Breast epithelium (tissue), 4 donors: ENCODE measurements at regions of chr15 and their contacts with region 1.

Region 1: DNA sequence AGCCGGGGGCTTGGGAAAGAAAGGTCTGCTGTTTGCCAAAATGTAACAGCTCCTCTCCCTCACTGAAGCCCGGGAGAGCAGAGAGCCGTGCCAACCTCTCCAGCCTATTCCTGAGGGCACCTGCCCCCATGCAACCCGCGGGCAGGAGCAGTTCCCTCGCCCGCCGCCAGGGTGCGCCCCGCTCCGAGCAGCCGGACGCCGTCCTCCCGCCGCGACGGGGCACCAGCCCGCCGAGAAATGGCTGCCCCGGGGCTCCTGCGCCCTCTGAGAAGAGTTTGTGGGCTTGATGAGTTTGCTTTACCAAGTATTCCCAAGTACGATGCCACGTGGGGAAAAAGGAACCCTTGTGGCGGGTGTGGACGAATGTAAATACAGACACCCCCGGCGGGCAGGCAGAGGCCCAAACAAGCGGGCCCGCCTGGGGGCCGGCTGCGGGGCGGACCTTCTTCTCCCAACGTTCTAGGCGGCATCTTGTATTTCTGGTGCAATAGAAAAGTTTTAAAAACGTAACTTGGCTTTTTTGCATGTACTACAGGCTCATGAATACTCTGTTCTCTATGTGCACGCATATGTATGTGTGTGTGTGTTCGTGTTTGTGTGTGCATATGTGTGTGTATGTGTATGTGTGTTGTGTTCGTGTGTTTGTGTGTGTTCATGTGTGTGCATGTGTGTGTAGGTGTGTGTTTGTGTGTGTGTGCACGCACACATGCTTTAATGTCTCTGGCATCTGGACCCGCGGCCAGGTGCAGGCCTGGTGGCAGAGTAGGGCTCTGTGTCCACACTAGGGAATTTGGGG is 162.9 kb downstream of the CHSY1 start:
- DNase-seq: peak; percentile 41 to 74
- H3K4me3 ChIP-seq: peak overlapping the region; percentile 23 to 47 (median 31)
- H3K27ac ChIP-seq: peak overlapping the region; percentile 79 to 92
- H3K4me1 ChIP-seq: peaks cover 8 to 12% of the 10 kb centered on the region in 2 donors
- H3K27me3 ChIP-seq: no peaks in the 10 kb centered on the region
- CTCF ChIP-seq: peak; percentile 97 to 98 (median 98)
- POLR2A ChIP-seq: no peak

Region 2: GRCh38 chr15:101062471-101063171 is 26.4 kb before region 1 on chr15:
- intact Hi-C with region 1: loop called (anchors 1 kb)
- DNase-seq: no peak
- H3K4me3 ChIP-seq: no peak overlapping the region
- H3K27ac ChIP-seq: no peak overlapping the region
- H3K4me1 ChIP-seq: peaks cover 0 to 8% of the 10 kb centered on the region in 2 donors
- H3K27me3 ChIP-seq: no peaks in the 10 kb centered on the region
- CTCF ChIP-seq: no peak
- POLR2A ChIP-seq: no peak

Region 3: DNA sequence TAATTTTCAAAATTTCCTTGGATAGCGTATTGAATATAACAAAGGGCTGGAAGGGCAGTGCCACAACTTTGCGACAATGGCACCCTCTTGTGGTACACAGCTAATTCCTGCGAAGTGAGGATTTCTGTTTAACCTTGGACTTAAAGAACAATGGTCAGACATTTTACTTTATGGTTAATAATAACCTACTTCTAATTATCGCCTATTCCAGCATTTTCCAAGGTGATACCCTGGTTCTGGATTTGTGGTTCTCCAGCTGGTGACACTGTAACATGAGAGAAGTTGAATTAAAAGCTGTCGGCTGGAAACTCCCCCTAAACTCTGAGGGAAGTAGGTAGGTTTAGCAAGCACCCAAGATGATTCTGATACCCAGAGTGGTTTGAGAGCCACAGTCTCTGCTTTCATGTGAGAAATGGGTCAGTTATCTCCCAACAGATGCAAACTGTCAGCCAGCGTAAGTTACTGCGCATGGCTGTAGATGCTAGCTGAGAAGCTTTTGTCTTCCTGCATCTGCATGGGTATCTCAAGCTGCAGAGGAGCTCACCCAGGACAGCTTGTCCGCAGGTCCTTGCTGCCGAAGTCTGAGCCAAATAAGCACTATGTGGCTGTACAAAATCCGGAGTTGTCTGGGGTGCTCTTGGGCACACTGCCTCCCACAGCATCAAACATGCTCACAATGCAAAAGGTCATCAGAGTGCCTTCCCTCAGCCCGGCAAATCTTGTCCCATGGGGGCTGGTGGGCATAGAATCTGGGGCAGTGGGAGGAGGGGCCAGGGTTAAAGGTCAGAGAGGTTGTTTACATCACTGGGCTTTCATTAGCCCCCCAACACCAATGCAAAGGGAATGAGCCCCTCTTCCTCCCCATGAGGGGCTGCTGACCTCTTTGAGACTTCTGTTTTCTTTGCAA is 169.5 kb after region 1 on chr15:
- intact Hi-C with region 1: loop called (anchors 2 kb)
- DNase-seq: peak in 1 of 2 donors; percentile 62
- H3K4me3 ChIP-seq: no peak overlapping the region
- H3K27ac ChIP-seq: no peak overlapping the region
- H3K4me1 ChIP-seq: no peaks in the 10 kb centered on the region
- H3K27me3 ChIP-seq: no peaks in the 10 kb centered on the region
- CTCF ChIP-seq: peak; percentile 43 to 91 (median 89)
- POLR2A ChIP-seq: no peak